Ovary (tissue), 10 donors: ENCODE measurements at regions of chr19 and their contacts with region 1.

Region 1: GRCh38 chr19:36169084-36169760 is 17.0 kb upstream of the COX7A1 start:
- DNase-seq: no peak
- H3K4me3 ChIP-seq: no peak overlapping the region
- H3K27ac ChIP-seq: no peak overlapping the region
- H3K4me1 ChIP-seq: no peaks in the 10 kb centered on the region
- H3K27me3 ChIP-seq: no peaks in the 10 kb centered on the region
- CTCF ChIP-seq: no peak
- EP300 ChIP-seq: no peak
- POLR2A ChIP-seq: no peak

Region 2: DNA sequence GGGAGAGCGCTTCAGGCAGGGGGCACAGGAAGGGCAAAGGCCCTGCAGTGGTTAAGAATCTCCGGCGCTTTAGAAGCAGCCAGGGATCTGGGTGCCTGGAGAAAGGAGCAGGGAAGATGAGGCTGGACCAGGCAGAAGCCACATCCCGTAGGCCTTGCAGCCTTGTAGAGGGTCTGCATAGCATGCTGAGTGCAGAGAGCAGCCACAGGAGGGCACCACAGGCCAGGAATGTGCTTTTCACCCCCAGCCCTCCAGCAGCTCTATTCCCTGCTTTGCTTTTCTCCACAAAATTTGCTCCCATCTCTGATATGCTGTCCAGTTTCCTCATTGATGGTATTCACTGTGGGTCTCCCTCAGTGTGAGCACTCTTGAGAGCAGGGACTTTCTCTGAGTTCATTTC is 108.8 kb before region 1 on chr19:
- intact Hi-C with region 1: loop called in 1 of 4 experiments (anchors 10 kb)
- DNase-seq: peak in 2 of 5 donors; percentile 64 to 66
- H3K4me3 ChIP-seq: no peak overlapping the region
- H3K27ac ChIP-seq: no peak overlapping the region
- H3K4me1 ChIP-seq: no peaks in the 10 kb centered on the region
- H3K27me3 ChIP-seq: no peaks in the 10 kb centered on the region
- CTCF ChIP-seq: no peak
- EP300 ChIP-seq: no peak
- POLR2A ChIP-seq: no peak

Region 3: DNA sequence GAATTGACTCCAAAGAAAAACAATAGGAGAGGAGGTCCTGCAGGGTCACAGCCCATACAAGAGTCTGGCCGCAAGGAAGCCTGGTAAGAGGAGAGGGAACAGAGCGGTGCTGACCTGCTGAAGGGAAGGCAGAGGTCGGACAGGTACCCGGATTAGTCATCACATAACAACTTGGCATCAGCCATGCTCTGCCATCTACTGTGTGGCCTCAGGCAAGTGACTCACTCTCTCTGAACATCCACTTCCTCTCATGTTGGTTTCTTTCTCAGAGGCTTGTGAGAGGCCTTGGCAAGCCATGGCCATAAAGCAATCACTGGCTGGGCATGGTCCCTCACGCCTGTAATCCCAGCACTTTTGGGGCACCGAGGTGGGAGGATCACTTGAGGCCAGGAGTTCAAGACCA is 36.7 kb before region 1 on chr19:
- intact Hi-C with region 1: loop called (anchors 2 to 5 kb)
- DNase-seq: no peak
- H3K4me3 ChIP-seq: no peak overlapping the region
- H3K27ac ChIP-seq: no peak overlapping the region
- H3K4me1 ChIP-seq: no peaks in the 10 kb centered on the region
- H3K27me3 ChIP-seq: no peaks in the 10 kb centered on the region
- CTCF ChIP-seq: no peak
- EP300 ChIP-seq: no peak
- POLR2A ChIP-seq: no peak

Region 4: DNA sequence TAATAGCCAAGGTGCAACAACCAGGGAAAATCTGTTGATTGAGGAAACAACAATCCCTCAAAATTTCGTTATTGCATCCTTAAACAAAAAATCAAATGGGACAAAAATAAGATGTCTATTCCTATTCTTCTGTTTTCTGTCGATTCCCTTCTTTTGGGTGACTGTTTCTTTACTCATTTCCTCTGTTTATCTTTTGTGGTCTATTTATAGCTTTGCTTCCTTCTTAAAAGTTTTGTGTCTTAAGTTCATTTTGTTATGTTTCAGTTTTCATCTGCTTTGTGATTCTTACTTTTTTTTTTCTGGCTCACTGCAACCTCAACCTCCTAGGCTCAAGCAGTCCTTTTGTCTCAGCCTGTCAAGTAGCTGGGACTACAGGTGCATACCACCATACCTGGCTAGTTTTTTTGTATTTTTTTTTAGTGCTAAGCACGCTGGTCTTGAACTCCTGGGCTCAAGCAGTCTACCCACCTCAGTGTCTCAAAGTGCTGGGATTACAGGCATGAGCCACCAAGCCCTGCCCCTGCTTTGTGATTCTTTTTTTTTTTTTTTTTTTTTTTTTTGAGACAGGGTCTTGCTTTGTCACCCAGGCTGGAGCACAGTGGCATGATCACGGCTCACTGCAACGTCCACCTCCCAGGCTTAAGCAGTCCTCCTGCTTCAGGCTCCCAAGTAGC is 56.1 kb after region 1 on chr19:
- intact Hi-C with region 1: no loop called
- DNase-seq: no peak
- H3K4me3 ChIP-seq: no peak overlapping the region
- H3K27ac ChIP-seq: no peak overlapping the region
- H3K4me1 ChIP-seq: peaks cover 7% of the 10 kb centered on the region
- H3K27me3 ChIP-seq: no peaks in the 10 kb centered on the region
- CTCF ChIP-seq: no peak
- EP300 ChIP-seq: no peak
- POLR2A ChIP-seq: no peak